CD4-positive, alpha-beta memory T cell (primary cell): ENCODE measurements at regions of chr1 and their contacts with region 1.

Region 1: DNA sequence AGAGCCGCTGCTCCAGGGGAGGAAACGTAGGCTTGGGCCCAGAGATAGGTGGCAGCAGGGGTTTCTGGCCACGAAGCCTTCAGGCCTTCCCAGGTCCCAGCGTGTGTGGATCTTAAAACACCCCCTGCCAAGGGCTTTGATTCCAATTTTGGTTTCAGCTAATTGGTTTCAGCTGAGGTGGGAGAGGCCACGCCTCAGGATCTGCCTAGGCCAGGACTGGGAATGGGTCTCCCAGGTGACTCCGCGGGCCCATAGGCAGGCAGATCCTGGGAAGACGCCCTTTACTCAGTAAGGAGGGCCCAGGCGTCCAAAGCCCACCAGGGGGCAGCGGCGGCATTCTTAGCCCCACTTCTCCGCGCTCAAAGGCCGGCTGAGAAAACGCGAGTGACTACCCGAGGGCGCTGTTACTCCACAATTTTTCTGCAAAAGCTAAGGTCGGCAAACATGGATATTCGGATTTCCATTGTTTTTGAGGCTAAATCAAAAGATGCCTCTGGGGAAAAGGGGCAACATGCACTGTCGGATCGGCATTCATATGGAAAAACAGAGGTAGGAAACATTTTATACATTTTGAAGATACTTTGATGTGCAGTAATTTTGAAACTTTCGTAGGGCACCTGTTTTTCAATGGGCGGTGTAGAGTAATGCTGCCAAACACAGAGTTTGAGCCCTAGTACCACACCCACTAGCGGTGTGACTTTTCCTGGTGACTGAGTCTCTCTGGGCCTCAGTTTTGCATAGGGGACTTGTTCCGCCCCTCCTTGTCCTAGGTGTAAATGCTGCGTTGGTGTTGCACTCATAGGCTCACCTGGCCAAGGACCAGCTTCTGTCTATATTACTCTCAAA is 31.8 kb upstream of the BCL10 start:
- DNase-seq: peak in 4 of 5 donors; percentile 36 to 48 (median 42)
- H3K4me3 ChIP-seq: peak overlapping the region in 1 of 2 donors; percentile 24
- H3K4me3 Mint-ChIP-seq: peak overlapping the region; percentile 63 to 89 (median 80)
- H3K27ac ChIP-seq: no peak overlapping the region
- H3K27ac Mint-ChIP-seq: peak overlapping the region in 1 of 7 donors; percentile 41
- H3K4me1 ChIP-seq: peaks cover 8% of the 10 kb centered on the region
- H3K4me1 Mint-ChIP-seq: peaks cover 2 to 9% (median 5%) of the 10 kb centered on the region in 4 donors
- H3K27me3 ChIP-seq: peaks cover 12% of the 10 kb centered on the region
- H3K27me3 Mint-ChIP-seq: peaks cover 19 to 26% of the 10 kb centered on the region in 2 donors

Region 2: GRCh38 chr1:85297855-85298629 is 10.2 kb before region 1 on chr1:
- CTCF ChIA-PET with region 1: interaction called, 19 read pairs
- POLR2A ChIA-PET with region 1: no interaction called
- intact Hi-C with region 1: no loop called
- DNase-seq: peak; percentile 50 to 85 (median 60)
- H3K4me3 ChIP-seq: no peak overlapping the region
- H3K4me3 Mint-ChIP-seq: peak overlapping the region in 7 of 8 donors; percentile 39 to 67 (median 55)
- H3K27ac ChIP-seq: no peak overlapping the region
- H3K27ac Mint-ChIP-seq: peak overlapping the region; percentile 23 to 77 (median 62)
- H3K4me1 ChIP-seq: peaks cover 16% of the 10 kb centered on the region
- H3K4me1 Mint-ChIP-seq: peaks cover 14 to 27% (median 18%) of the 10 kb centered on the region in 4 donors
- H3K27me3 ChIP-seq: no peaks in the 10 kb centered on the region
- H3K27me3 Mint-ChIP-seq: peaks cover 0 to 1% of the 10 kb centered on the region in 2 donors

Region 3: GRCh38 chr1:85692730-85693314 is 384.6 kb after region 1 on chr1:
- CTCF ChIA-PET with region 1: interaction called, 3 read pairs
- POLR2A ChIA-PET with region 1: no interaction called
- intact Hi-C with region 1: loop called (anchors 5 kb)
- DNase-seq: no peak
- H3K4me3 ChIP-seq: no peak overlapping the region
- H3K4me3 Mint-ChIP-seq: no peak overlapping the region
- H3K27ac ChIP-seq: no peak overlapping the region
- H3K27ac Mint-ChIP-seq: peak overlapping the region in 1 of 7 donors; percentile 31
- H3K4me1 ChIP-seq: no peaks in the 10 kb centered on the region
- H3K4me1 Mint-ChIP-seq: peaks cover 11 to 32% (median 15%) of the 10 kb centered on the region in 4 donors
- H3K27me3 ChIP-seq: no peaks in the 10 kb centered on the region
- H3K27me3 Mint-ChIP-seq: no peaks in the 10 kb centered on the region